Activated CD4-positive, alpha-beta T cell treated with anti-CD3 and anti-CD28 coated beads, Interleukin-2, amount 10 ng/mL, durations not matched to agents 24 days and 14 days (primary cell): ENCODE measurements at regions of chr14 and their contacts with region 1.

Region 1: GRCh38 chr14:52729925-52730667 is at the start of gene STYX:
- DNase-seq: peak; percentile 99
- H3K4me3 Mint-ChIP-seq: peak within 1 kb of the TSS; percentile 96
- H3K27ac Mint-ChIP-seq: peak within 1 kb of the TSS; percentile 88
- H3K4me1 Mint-ChIP-seq: peaks cover 21% of the 10 kb centered on the region
- H3K27me3 Mint-ChIP-seq: no peaks in the 10 kb centered on the region
- total RNA-seq, gene STYX: 18.3 and 19.7 TPM in 2 replicates

Region 2: DNA sequence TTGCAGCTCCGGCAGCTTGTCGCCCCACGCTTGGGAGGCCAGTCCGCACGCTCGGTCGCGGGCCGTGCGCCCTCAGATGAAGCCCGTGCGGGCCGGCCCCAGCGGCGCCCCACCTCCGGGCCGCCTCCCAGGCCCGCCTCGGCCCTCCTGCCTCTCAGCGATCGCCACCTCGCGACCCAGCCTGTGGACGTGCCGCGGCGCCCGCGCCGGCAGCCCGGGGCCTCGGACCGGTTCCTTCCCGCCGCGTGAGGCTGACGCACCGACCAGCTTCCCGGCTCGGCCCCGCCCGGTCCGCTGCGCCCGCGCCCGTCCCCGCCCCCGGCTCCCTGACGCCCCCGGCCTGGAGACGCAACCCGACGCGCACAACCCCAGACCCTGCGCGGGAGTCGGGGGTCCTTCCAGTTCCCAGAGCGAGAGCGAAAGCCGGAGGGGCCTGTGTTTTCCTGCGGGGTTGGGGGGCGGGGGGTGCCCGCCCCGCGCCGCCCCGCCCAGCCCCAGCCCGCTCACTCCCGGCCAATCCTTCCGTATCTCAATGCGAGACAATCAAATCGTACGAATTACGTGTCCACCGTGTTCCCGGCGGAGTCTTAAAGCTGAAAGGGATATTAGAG is 34.5 kb before region 1 on chr14 and contains the start of gene ERO1A:
- intact Hi-C with region 1: loop called (anchors 1 kb)
- DNase-seq: peak; percentile 92
- H3K4me3 Mint-ChIP-seq: peak within 1 kb of the TSS; percentile 96
- H3K27ac Mint-ChIP-seq: peak within 1 kb of the TSS; percentile 99
- H3K4me1 Mint-ChIP-seq: peaks cover 33% of the 10 kb centered on the region
- H3K27me3 Mint-ChIP-seq: no peaks in the 10 kb centered on the region
- total RNA-seq, gene ERO1A: 170 and 171 TPM in 2 replicates

Region 3: DNA sequence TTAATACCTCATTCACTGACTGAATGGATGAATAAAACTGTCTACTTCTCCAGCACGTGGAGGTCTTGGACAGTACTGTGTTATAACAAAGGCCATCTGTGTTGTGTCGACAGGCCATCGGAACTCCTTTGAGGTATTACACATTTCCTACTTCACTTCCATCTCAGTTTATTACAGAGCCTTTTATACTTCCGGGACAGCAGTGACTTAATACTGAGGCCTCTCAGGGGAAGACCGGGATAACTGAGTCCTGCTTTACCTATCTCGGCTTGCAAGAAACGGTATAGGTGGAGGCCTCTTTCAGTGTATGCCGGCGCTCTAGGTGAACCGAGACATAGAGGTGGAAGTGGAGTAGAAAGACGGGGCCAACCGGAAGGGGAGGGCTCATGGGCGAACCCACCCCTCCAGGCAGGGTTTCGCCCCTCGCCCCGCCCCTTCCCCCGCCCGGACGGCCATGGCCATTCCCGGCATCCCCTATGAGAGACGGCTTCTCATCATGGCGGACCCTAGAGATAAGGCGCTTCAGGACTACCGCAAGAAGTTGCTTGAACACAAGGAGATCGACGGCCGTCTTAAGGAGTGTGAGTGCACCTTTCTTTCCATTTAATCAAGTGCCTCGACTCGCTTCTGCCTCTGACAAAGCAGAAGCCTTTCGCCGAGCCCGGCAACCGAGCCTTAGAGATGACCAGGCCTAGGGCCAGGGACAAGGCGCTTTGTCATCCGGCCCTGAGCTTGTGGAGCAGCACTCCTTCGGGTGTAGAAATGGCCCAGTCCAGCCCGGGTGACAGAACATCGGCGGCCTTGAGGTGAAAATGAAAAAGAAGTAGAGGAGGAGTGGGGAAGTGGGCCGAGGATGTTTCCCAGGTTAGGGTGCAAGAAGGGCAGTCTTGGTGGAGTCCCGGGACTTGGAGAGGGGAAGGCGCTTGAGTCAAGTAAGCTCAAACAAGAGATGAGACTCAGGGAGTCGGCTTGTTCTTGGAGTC is 23.1 kb before region 1 on chr14 and contains the start of gene PSMC6:
- intact Hi-C with region 1: loop called (anchors 1 kb)
- DNase-seq: peak; percentile 96
- H3K4me3 Mint-ChIP-seq: peak within 1 kb of the TSS; percentile 99
- H3K27ac Mint-ChIP-seq: peak within 1 kb of the TSS; percentile 98
- H3K4me1 Mint-ChIP-seq: peaks cover 34% of the 10 kb centered on the region
- H3K27me3 Mint-ChIP-seq: no peaks in the 10 kb centered on the region
- total RNA-seq, gene PSMC6: 142 and 143 TPM in 2 replicates

Region 4: DNA sequence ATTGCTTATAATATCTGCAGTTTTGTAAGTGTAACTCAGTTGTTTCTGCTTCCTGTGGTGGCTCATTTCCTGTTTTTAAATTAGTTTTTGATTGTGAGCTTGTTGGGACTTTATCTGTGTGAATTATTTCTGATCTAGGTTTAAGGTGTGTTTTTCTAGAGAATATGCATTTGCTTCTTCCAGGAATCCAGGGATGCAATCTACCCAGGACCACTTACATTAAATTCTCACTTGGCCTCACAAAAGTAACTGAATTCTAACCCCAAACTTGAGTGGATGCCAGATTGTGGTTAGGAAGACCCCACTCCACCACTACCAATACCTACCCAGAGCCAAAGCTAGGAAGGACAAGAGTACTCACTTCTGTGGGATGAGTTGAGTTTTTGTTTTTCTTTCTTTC is 11.8 kb after region 1 on chr14:
- intact Hi-C with region 1: loop called (anchors 1 kb)
- DNase-seq: no peak
- H3K4me3 Mint-ChIP-seq: peak overlapping the region; percentile 75
- H3K27ac Mint-ChIP-seq: peak overlapping the region; percentile 91
- H3K4me1 Mint-ChIP-seq: peaks cover 31% of the 10 kb centered on the region
- H3K27me3 Mint-ChIP-seq: no peaks in the 10 kb centered on the region

Region 5: DNA sequence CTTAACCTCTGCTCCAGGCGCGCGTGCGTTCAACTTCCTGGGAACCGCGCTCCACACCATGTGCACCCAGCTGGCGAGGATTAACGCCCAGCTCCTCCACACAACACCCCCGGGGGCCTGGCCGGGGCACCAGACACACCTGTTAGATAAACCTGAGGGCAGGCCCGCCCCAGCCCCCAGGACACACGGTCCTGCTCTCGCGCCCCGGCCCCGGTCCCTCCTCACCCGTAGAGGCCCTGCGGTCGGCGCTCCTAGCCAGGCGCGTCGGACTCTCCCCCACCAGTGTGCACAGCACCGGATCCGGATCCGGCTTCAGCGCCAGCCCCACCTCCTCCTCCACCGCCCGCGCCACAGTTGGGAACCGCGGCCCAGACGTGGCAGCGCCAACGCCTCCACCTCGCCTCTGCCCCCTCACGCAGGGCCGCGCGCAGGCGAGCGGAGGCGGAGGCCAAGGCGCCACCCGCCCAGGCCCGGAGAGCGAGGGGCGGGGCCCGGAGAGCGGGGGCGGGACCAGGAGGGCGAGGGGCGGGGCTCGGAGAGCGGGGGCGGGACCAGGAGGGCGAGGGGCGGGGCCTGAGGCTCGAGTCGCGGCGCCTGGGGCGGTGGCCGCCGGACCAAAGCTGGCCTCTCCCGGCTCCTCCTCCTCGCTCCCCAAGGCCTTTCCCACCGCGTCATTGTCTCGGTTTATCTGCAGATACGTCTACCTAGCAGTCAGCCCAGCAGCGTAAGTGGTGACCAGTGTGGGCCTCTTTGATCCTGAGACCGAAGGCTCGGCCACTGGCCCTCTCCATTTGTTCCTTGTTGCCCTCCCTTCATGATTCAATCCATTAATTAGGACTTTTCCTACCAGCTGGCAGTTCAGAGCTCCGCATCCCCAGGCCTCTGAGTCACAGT is 61.4 kb after region 1 on chr14 and contains the start of gene GNPNAT1:
- intact Hi-C with region 1: loop called (anchors 1 kb)
- DNase-seq: peak; percentile 96
- H3K4me3 Mint-ChIP-seq: peak within 1 kb of the TSS; percentile 97
- H3K27ac Mint-ChIP-seq: peak within 1 kb of the TSS; percentile 83
- H3K4me1 Mint-ChIP-seq: peaks cover 32% of the 10 kb centered on the region
- H3K27me3 Mint-ChIP-seq: no peaks in the 10 kb centered on the region
- total RNA-seq, gene GNPNAT1: 30.6 and 32.4 TPM in 2 replicates